ENCODE measurements at regions of chr2 and their contacts with region 1.

Region 1: GRCh38 chr2:46296840-46297545 is at the start of gene EPAS1:
- DNase-seq: peak; percentile 61 to 92 (median 82)
- ATAC-seq: peak; percentile 85
- H3K4me3 ChIP-seq: peak within 1 kb of the TSS; percentile 66 to 80
- H3K4me3 Mint-ChIP-seq: peak within 1 kb of the TSS; percentile 89
- H3K27ac ChIP-seq: peak within 1 kb of the TSS in 1 of 2 experiments; percentile 15
- H3K27ac Mint-ChIP-seq: no peak within 1 kb of the TSS
- H3K4me1 ChIP-seq: peaks cover 26% of the 10 kb centered on the region
- H3K4me1 Mint-ChIP-seq: peaks cover 25% of the 10 kb centered on the region
- H3K27me3 ChIP-seq: peaks cover 26 to 32% of the 10 kb centered on the region in 2 experiments
- H3K27me3 Mint-ChIP-seq: peaks cover 38% of the 10 kb centered on the region
- CTCF ChIP-seq: no peak
- total RNA-seq, gene EPAS1: 18.5 to 19.7 TPM

Region 2: GRCh38 chr2:45567974-45568789 is 728.8 kb before region 1 on chr2:
- CTCF ChIA-PET with region 1: no interaction called
- POLR2A ChIA-PET with region 1: no interaction called
- intact Hi-C with region 1: loop called in 1 of 2 experiments (anchors 10 kb)
- DNase-seq: peak in 2 of 9 experiments; percentile 82 to 93
- ATAC-seq: peak; percentile 97
- H3K4me3 ChIP-seq: peak overlapping the region; percentile 53 to 55
- H3K4me3 Mint-ChIP-seq: peak overlapping the region; percentile 89
- H3K27ac ChIP-seq: peak overlapping the region; percentile 51 to 93
- H3K27ac Mint-ChIP-seq: peak overlapping the region; percentile 88
- H3K4me1 ChIP-seq: peaks cover 15% of the 10 kb centered on the region
- H3K4me1 Mint-ChIP-seq: peaks cover 27% of the 10 kb centered on the region
- H3K27me3 ChIP-seq: no peaks in the 10 kb centered on the region
- H3K27me3 Mint-ChIP-seq: no peaks in the 10 kb centered on the region
- CTCF ChIP-seq: no peak

Region 3: DNA sequence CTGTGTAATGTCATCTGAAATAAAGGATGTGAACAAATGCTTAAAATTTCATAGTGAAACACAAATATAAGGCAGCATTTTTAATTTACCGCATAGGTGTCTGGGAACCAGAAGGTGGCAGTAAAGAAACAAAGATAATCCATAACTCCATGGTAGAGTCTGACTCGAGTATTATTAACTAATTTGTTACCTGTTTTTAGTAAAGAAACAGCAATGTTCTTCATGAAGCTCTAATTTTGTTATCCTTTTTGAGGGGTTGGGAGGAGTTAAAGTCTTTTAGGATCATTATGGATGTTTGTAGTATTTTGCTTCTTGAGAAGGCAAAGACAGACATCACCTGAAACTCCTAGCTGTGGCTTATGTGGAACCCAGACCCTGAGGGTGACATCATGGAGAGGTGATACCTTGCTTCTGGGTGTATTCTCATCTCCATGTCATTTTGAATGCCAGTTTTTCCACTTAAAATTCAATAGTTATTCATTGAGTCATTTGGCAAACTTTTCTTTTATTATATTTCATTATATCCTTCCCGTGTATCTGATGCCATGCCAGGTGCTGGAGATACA is 286.0 kb before region 1 on chr2:
- CTCF ChIA-PET with region 1: no interaction called
- POLR2A ChIA-PET with region 1: no interaction called
- intact Hi-C with region 1: loop called in 1 of 2 experiments (anchors 5 kb)
- DNase-seq: peak in 2 of 9 experiments; percentile 28 to 50
- ATAC-seq: no peak
- H3K4me3 ChIP-seq: no peak overlapping the region
- H3K4me3 Mint-ChIP-seq: no peak overlapping the region
- H3K27ac ChIP-seq: no peak overlapping the region
- H3K27ac Mint-ChIP-seq: no peak overlapping the region
- H3K4me1 ChIP-seq: no peaks in the 10 kb centered on the region
- H3K4me1 Mint-ChIP-seq: no peaks in the 10 kb centered on the region
- H3K27me3 ChIP-seq: no peaks in the 10 kb centered on the region
- H3K27me3 Mint-ChIP-seq: no peaks in the 10 kb centered on the region
- CTCF ChIP-seq: peak; percentile 42

Region 4: DNA sequence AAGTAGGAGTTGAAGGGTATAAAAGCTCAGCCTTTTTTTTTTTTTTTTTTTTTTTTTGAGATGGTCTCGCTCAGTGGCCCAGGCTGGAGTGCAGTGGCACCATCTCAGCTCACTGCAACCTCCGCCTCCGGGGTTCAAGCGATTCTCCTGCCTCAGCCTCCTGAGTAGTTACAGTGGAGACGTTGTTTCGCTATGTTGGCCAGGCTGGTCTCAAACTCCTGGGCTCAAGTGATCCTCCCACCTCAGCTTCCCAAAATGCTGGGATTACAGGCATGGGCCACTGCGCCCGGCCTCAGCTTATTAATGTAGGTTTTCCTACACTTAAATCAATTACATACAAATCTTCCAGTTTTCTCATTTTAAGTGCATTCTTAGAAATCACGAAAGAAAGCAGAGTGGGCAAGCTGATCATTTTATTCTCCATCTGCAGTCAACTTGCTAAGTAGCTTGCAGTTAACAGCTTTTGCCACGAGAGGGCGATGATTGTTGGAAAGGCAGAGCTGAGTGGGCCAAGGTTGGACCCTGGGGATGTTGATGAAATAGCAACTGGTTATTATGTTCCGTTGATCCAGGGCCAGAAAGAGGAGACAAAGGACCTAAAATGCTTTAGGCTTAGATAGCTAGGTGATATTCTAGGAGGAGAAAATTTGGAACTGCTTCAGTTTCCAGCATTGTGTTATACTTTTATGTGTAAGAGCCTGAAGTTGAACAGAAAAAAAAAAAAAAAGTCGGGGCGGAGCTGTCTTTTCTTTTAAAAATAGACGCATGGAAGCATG is 234.2 kb before region 1 on chr2:
- CTCF ChIA-PET with region 1: interaction called, 8 read pairs
- POLR2A ChIA-PET with region 1: no interaction called
- intact Hi-C with region 1: loop called in 1 of 2 experiments (anchors 5 kb)
- DNase-seq: peak; percentile 51 to 74 (median 70)
- ATAC-seq: peak; percentile 76
- H3K4me3 ChIP-seq: no peak overlapping the region
- H3K4me3 Mint-ChIP-seq: no peak overlapping the region
- H3K27ac ChIP-seq: no peak overlapping the region
- H3K27ac Mint-ChIP-seq: no peak overlapping the region
- H3K4me1 ChIP-seq: no peaks in the 10 kb centered on the region
- H3K4me1 Mint-ChIP-seq: peaks cover 3% of the 10 kb centered on the region
- H3K27me3 ChIP-seq: no peaks in the 10 kb centered on the region
- H3K27me3 Mint-ChIP-seq: peaks cover 3% of the 10 kb centered on the region
- CTCF ChIP-seq: peak; percentile 79

Region 5: GRCh38 chr2:46351750-46352138 is 54.8 kb after region 1 on chr2:
- CTCF ChIA-PET with region 1: interaction called, 4 read pairs
- POLR2A ChIA-PET with region 1: no interaction called
- intact Hi-C with region 1: loop called (anchors 2 to 5 kb)
- DNase-seq: peak; percentile 34 to 86 (median 65)
- ATAC-seq: peak; percentile 85
- H3K4me3 ChIP-seq: peak overlapping the region; percentile 36 to 38
- H3K4me3 Mint-ChIP-seq: peak overlapping the region; percentile 75
- H3K27ac ChIP-seq: peak overlapping the region; percentile 28 to 67
- H3K27ac Mint-ChIP-seq: peak overlapping the region; percentile 87
- H3K4me1 ChIP-seq: peaks cover 65% of the 10 kb centered on the region
- H3K4me1 Mint-ChIP-seq: peaks cover 85% of the 10 kb centered on the region
- H3K27me3 ChIP-seq: no peaks in the 10 kb centered on the region
- H3K27me3 Mint-ChIP-seq: no peaks in the 10 kb centered on the region
- CTCF ChIP-seq: no peak

Region 6: GRCh38 chr2:46699934-46700256 is 402.9 kb after region 1 on chr2:
- CTCF ChIA-PET with region 1: no interaction called
- POLR2A ChIA-PET with region 1: no interaction called
- intact Hi-C with region 1: loop called in 1 of 2 experiments (anchors 2 kb)
- DNase-seq: peak in 3 of 9 experiments; percentile 12 to 52 (median 28)
- ATAC-seq: no peak
- H3K4me3 ChIP-seq: peak overlapping the region; percentile 56 to 61
- H3K4me3 Mint-ChIP-seq: peak overlapping the region; percentile 95
- H3K27ac ChIP-seq: peak overlapping the region; percentile 21 to 50
- H3K27ac Mint-ChIP-seq: peak overlapping the region; percentile 94
- H3K4me1 ChIP-seq: peaks cover 13% of the 10 kb centered on the region
- H3K4me1 Mint-ChIP-seq: peaks cover 56% of the 10 kb centered on the region
- H3K27me3 ChIP-seq: no peaks in the 10 kb centered on the region
- H3K27me3 Mint-ChIP-seq: no peaks in the 10 kb centered on the region
- CTCF ChIP-seq: no peak